Activated T-helper 2 cell treated with anti-CD3 and anti-CD28 coated beads, Interferon-gamma antibody, Interleukin-2, Interleukin-4, amounts not matched to agents 10 μg/mL and 5 μg/mL and 100 μg/mL, durations not matched to agents 14 hours and 24 hours and 36 hours (primary cell): ENCODE measurements at regions of chr4 and their contacts with region 1.

Region 1: GRCh38 chr4:163494360-163495162 is at the start of gene TMA16:
- DNase-seq: peak; percentile 86
- H3K4me3 Mint-ChIP-seq: peak within 1 kb of the TSS; percentile 95
- H3K27ac Mint-ChIP-seq: peak within 1 kb of the TSS; percentile 97
- H3K4me1 Mint-ChIP-seq: peaks cover 19% of the 10 kb centered on the region
- H3K27me3 Mint-ChIP-seq: peaks cover 12% of the 10 kb centered on the region
- total RNA-seq, gene TMA16: 75.5 and 81.3 TPM in 2 replicates

Region 2: DNA sequence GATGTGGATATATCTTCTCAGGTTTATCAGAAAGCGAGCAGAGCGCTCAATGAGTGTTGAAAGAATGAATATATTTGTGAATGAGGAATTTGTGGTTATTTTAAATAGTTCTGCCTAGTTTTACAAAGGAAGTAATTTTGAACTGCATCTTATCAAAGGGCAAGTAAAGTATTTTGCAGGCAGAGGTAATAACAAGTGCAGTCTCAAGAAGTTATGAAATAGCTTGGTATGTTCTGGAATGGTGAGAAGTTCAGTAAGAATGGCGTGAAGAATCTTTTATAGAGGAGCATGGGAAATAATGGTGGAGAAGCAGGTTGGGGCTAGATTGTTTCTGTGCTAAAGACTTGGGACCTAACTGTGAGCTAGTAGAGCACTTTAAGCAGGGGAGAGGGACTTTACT is 10.8 kb after region 1 on chr4:
- intact Hi-C with region 1: loop called (anchors 2 kb)
- DNase-seq: no peak
- H3K4me3 Mint-ChIP-seq: no peak overlapping the region
- H3K27ac Mint-ChIP-seq: no peak overlapping the region
- H3K4me1 Mint-ChIP-seq: peaks cover 18% of the 10 kb centered on the region
- H3K27me3 Mint-ChIP-seq: no peaks in the 10 kb centered on the region

Region 3: DNA sequence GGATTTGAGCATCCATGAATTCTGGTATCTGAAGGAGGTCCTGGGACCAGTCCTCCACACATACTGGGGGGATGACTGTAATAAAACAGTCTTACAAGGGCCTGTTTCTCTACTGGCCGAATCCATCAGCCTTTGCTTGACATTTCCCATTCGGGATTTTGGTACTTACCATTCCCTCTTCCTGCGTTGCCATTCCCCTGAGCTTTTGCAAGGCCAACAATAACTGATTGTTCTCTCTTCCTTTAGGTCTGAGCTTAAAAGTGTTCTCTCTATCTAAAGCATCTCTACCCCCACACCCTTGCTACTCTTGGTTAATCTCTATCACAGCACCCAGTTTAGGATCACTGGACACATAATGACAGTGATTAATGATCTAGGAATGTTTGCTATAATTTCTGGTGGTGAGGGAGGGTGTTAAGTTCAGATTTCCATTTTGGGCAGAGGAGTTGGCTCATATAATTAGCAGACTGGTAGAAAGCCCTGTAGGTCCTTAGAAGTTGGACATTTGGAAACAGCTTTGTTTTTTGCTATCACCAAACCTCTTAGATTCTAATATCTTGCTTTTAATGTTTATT is 29.3 kb after region 1 on chr4:
- intact Hi-C with region 1: loop called (anchors 2 kb)
- DNase-seq: no peak
- H3K4me3 Mint-ChIP-seq: no peak overlapping the region
- H3K27ac Mint-ChIP-seq: no peak overlapping the region
- H3K4me1 Mint-ChIP-seq: no peaks in the 10 kb centered on the region
- H3K27me3 Mint-ChIP-seq: no peaks in the 10 kb centered on the region